Right ventricle myocardium inferior (tissue), 1 donor: ENCODE measurements at regions of chr1 and their contacts with region 1.

Region 1: DNA sequence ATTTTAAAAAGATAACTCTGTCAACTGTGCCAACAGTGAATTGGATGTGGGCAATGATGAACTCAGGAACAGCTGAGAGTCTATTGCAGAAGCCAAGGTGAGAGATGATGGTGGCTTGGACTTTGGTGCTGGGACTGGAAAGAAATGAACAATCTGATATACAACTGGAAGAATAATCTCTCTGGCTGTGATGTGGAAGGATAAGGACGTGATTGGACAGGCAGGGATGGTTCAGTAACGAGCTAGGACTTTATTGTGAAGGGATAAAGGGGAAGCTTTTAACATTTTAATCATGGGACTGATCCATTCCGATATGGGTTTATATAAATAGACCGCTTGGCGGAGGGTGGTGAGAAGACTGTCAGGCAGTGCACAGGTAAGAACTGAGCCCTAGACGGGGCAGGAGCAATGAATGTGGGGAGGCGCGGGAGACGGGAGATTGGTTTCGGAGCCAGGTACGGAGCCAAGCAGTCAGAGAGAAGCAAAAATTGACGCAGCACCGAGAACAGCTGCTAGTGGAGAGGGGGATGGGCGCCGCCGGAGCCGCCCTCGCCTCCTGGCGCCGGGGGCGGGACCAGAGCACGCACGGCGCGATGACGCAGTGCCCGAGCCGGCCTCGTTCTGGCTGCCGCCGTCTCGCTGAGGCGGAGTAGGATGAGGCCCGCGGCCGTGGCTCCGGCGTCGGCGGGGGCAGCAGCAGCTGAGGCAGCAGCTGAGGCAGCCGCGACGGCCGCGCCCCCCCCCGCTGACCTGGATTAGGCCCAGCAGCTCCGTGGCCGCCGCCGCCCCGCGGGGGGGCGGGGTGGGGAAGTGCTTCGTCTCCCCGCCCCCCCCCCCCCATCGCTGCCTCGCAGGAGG is at the start of gene RNF11:
- DNase-seq: peak; percentile 96
- ATAC-seq: peak; percentile 99
- total RNA-seq, gene RNF11: 120 TPM

Region 2: DNA sequence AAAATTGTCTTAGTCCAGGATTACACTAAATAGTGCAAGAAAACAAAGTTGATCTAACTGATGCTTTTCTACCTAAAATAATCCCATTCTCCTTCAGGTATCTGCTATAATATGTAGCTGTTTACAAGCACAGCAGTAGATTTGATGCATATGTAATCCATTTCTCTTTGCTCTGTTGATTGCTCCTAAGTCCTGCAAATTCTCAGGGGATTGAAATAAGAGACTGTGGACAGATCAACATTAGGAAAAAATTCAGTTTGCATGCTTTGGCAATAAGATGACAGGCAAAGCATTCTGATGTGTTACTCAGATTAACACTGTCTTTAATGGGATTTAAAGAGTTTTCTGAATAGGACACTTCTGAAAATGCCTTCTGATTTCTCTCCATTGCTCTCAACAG is 34.8 kb after region 1 on chr1:
- intact Hi-C with region 1: loop called (anchors 5 kb)
- DNase-seq: no peak
- ATAC-seq: no peak

Region 3: GRCh38 chr1:51392241-51392640 is 156.3 kb after region 1 on chr1:
- intact Hi-C with region 1: no loop called
- DNase-seq: no peak
- ATAC-seq: no peak